ENCODE measurements at regions of chr15 and their contacts with region 1.

Region 1: GRCh38 chr15:85296615-85297402 is 83.6 kb upstream of the AKAP13 start:
- DNase-seq: peak; percentile 85
- ATAC-seq: peak; percentile 97
- H3K4me3 Mint-ChIP-seq: peak overlapping the region; percentile 27
- H3K27ac Mint-ChIP-seq: peak overlapping the region; percentile 15
- H3K4me1 Mint-ChIP-seq: peaks cover 17% of the 10 kb centered on the region
- H3K27me3 Mint-ChIP-seq: peaks cover 7% of the 10 kb centered on the region

Region 2: GRCh38 chr15:85312486-85312885 is 15.7 kb after region 1 on chr15:
- CTCF ChIA-PET with region 1: interaction called, 48 read pairs
- POLR2A ChIA-PET with region 1: interaction called, 7 read pairs
- DNase-seq: no peak
- ATAC-seq: no peak
- H3K4me3 Mint-ChIP-seq: no peak overlapping the region
- H3K27ac Mint-ChIP-seq: peak overlapping the region; percentile 14
- H3K4me1 Mint-ChIP-seq: peaks cover 44% of the 10 kb centered on the region
- H3K27me3 Mint-ChIP-seq: no peaks in the 10 kb centered on the region

Region 3: GRCh38 chr15:85402195-85402881 is 105.5 kb after region 1 on chr15:
- CTCF ChIA-PET with region 1: interaction called, 17 read pairs
- POLR2A ChIA-PET with region 1: no interaction called
- DNase-seq: no peak
- ATAC-seq: no peak
- H3K4me3 Mint-ChIP-seq: no peak overlapping the region
- H3K27ac Mint-ChIP-seq: no peak overlapping the region
- H3K4me1 Mint-ChIP-seq: peaks cover 50% of the 10 kb centered on the region
- H3K27me3 Mint-ChIP-seq: no peaks in the 10 kb centered on the region

Region 4: GRCh38 chr15:85504749-85505676 is 208.2 kb after region 1 on chr15:
- CTCF ChIA-PET with region 1: interaction called, 18 read pairs
- POLR2A ChIA-PET with region 1: no interaction called
- DNase-seq: peak; percentile 66
- ATAC-seq: no peak
- H3K4me3 Mint-ChIP-seq: no peak overlapping the region
- H3K27ac Mint-ChIP-seq: peak overlapping the region; percentile 28
- H3K4me1 Mint-ChIP-seq: peaks cover 10% of the 10 kb centered on the region
- H3K27me3 Mint-ChIP-seq: no peaks in the 10 kb centered on the region

Measured in activated CD8-positive, alpha-beta T cell treated with anti-CD3 and anti-CD28 coated beads, Interleukin-2, amount 10 ng/mL, durations not matched to agents 7 days and 5 days (primary cell).